Prostate gland (tissue), 2 donors: ENCODE measurements at regions of chr1 and their contacts with region 1.

Region 1: GRCh38 chr1:179002552-179003345 is 22.9 kb upstream of the FAM20B start:
- DNase-seq: peak; percentile 51
- H3K4me3 ChIP-seq: no peak overlapping the region
- H3K27ac ChIP-seq: no peak overlapping the region
- H3K4me1 ChIP-seq: no peaks in the 10 kb centered on the region
- H3K27me3 ChIP-seq: no peaks in the 10 kb centered on the region
- CTCF ChIP-seq: peak; percentile 82 to 93 (median 90)
- POLR2A ChIP-seq: no peak

Region 2: DNA sequence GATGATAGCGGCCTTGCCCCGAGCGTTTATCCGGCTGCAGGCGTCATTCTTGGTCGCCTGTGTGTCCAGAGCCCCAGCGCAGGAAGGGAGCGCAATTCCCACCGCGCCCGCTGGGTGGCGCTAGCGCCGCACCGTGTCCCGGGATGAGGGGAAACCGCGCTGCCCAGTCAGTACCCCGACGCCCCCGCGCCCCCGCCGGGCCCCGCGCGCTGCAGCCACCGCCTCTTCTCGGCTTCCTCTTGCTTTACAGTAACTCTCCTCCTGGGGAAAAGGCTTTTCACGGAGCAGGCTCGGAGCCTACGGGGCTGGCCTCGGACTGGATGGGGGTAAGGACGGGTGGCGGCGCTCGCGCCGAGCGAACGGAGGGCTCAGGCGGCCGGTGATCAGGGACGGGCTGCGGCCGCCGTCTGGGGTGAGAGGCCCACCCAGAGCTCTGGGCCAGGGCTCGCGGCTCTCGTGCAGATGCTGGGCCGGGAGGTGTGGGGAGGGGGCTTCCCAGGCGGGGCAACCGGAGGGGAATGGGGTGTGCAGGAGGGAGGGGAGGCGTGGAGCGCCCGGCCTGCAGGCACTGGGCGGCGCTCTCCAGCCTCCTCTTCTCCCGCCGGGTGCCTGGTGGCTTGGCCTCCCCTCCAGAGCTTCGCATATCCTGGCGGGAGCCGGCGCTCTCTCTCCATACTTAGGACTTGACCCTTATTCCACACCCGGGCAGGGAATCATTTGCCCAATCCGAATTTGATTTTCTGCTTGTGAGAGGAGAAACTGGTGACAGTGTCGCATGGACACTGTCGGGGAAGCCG is 460.0 kb before region 1 on chr1:
- intact Hi-C with region 1: loop called (anchors 2 kb)
- DNase-seq: peak; percentile 80
- H3K4me3 ChIP-seq: peak overlapping the region; percentile 59 to 67
- H3K27ac ChIP-seq: peak overlapping the region; percentile 74 to 78
- H3K4me1 ChIP-seq: no peaks in the 10 kb centered on the region
- H3K27me3 ChIP-seq: no peaks in the 10 kb centered on the region
- CTCF ChIP-seq: peak; percentile 94 to 99 (median 97)
- POLR2A ChIP-seq: no peak

Region 3: DNA sequence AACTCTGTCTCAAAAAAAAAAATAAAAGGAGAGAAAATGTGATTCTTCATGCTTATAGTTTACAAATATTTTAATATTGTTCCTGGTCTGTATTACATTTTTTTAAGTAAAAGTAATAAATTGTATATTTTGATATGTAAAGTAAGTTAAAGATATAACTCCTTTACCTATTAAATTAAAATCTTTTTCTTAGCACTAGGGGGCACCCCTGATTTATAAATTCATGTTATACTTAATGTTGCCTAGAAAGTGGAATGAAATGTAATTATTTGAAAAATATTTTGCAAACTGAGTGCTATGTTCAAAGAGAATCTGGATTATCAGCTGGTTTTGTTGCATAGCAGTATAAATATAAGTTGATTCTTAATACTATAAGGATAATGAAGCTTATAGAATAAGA is 228.5 kb before region 1 on chr1:
- intact Hi-C with region 1: loop called (anchors 2 kb)
- DNase-seq: no peak
- H3K4me3 ChIP-seq: no peak overlapping the region
- H3K27ac ChIP-seq: no peak overlapping the region
- H3K4me1 ChIP-seq: no peaks in the 10 kb centered on the region
- H3K27me3 ChIP-seq: no peaks in the 10 kb centered on the region
- CTCF ChIP-seq: peak in 3 of 4 experiments; percentile 26 to 33 (median 31)
- POLR2A ChIP-seq: no peak

Region 4: GRCh38 chr1:178818416-178818815 is 184.3 kb before region 1 on chr1:
- intact Hi-C with region 1: loop called (anchors 1 kb)
- DNase-seq: no peak
- H3K4me3 ChIP-seq: no peak overlapping the region
- H3K27ac ChIP-seq: no peak overlapping the region
- H3K4me1 ChIP-seq: no peaks in the 10 kb centered on the region
- H3K27me3 ChIP-seq: no peaks in the 10 kb centered on the region
- CTCF ChIP-seq: no peak
- POLR2A ChIP-seq: no peak

Region 5: DNA sequence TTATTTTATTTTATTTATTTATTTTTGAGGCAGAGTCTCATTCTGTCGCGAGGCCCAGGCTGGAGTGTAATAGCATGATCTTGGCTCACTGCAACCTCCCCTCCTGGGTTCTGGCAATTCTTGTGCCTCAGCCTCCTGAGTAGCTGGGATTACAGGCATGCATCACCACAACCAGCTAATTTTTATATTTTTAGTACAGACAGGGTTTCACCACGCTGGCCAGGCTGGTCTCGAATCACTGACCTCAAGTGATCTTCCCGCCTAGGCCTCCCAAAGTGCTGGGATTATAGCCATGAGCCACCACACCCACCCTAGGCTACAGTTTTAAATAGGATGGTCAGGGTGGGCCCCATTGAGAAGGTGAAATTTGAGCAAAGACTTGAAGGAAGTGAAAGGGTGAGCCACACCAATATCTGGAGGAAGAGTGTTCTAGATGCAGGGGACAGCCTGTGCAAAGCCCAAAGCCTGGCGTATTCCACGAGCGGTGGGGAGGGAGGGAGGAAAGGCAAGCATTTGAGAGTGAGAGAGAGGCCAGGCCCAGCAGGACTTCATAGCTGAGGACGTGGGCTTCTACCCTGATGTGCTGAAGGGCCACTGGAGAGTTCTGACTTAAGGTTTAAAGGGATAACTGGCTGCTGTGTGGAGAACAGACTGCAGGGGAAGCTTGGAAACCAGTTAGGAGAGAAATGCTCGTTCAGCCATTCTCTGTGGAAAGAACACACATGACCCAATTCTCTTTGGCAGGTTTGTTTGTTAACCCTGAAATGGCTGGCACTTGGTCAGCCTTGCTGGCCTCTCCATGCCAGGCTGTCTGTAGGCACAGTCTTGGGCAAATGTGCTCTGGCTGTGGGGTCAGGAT is 39.7 kb before region 1 on chr1:
- intact Hi-C with region 1: no loop called
- DNase-seq: no peak
- H3K4me3 ChIP-seq: no peak overlapping the region
- H3K27ac ChIP-seq: no peak overlapping the region
- H3K4me1 ChIP-seq: no peaks in the 10 kb centered on the region
- H3K27me3 ChIP-seq: no peaks in the 10 kb centered on the region
- CTCF ChIP-seq: no peak
- POLR2A ChIP-seq: no peak